Activated naive CD4-positive, alpha-beta T cell treated with anti-CD3 and anti-CD28 coated beads for 36 hours (primary cell): ENCODE measurements at regions of chr12 and their contacts with region 1.

Region 1: DNA sequence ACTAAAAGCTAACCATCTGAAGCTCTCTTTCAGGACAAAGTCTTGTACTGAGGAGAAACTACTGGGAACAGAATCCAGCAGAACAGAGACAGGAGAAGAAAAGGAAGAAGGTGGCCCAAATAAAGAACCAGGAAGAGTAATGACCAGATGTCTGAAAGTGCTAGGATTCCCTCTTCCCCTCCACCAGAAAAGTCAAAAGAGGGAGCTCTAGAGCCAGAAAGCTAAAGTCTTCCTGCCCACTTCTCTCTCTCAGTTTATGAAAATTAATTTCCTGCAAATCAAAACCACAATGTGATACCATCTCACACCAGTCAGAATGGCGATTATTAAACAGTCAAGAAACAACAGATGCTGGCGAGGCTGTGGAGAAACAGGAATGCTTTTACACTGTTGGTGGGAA is 47.2 kb downstream of the SPPL3 start:
- DNase-seq: no peak
- H3K4me3 Mint-ChIP-seq: no peak overlapping the region
- H3K27ac Mint-ChIP-seq: no peak overlapping the region
- H3K4me1 Mint-ChIP-seq: peaks cover 38% of the 10 kb centered on the region
- H3K27me3 Mint-ChIP-seq: no peaks in the 10 kb centered on the region

Region 2: GRCh38 chr12:120886199-120887018 is 29.4 kb after region 1 on chr12:
- CTCF ChIA-PET with region 1: interaction called, 7 read pairs
- intact Hi-C with region 1: loop called (anchors 2 kb)
- DNase-seq: no peak
- H3K4me3 Mint-ChIP-seq: no peak overlapping the region
- H3K27ac Mint-ChIP-seq: peak overlapping the region; percentile 30
- H3K4me1 Mint-ChIP-seq: peaks cover 42% of the 10 kb centered on the region
- H3K27me3 Mint-ChIP-seq: no peaks in the 10 kb centered on the region

Region 3: GRCh38 chr12:120904197-120904773 is 47.3 kb after region 1 on chr12 and contains the start of gene SPPL3:
- CTCF ChIA-PET with region 1: interaction called, 4 read pairs
- intact Hi-C with region 1: loop called (anchors 5 kb)
- DNase-seq: peak; percentile 91
- H3K4me3 Mint-ChIP-seq: peak within 1 kb of the TSS; percentile 99
- H3K27ac Mint-ChIP-seq: peak within 1 kb of the TSS; percentile 91
- H3K4me1 Mint-ChIP-seq: peaks cover 28% of the 10 kb centered on the region
- H3K27me3 Mint-ChIP-seq: no peaks in the 10 kb centered on the region
- total RNA-seq, gene SPPL3: 19.8 to 22.2 TPM

Region 4: DNA sequence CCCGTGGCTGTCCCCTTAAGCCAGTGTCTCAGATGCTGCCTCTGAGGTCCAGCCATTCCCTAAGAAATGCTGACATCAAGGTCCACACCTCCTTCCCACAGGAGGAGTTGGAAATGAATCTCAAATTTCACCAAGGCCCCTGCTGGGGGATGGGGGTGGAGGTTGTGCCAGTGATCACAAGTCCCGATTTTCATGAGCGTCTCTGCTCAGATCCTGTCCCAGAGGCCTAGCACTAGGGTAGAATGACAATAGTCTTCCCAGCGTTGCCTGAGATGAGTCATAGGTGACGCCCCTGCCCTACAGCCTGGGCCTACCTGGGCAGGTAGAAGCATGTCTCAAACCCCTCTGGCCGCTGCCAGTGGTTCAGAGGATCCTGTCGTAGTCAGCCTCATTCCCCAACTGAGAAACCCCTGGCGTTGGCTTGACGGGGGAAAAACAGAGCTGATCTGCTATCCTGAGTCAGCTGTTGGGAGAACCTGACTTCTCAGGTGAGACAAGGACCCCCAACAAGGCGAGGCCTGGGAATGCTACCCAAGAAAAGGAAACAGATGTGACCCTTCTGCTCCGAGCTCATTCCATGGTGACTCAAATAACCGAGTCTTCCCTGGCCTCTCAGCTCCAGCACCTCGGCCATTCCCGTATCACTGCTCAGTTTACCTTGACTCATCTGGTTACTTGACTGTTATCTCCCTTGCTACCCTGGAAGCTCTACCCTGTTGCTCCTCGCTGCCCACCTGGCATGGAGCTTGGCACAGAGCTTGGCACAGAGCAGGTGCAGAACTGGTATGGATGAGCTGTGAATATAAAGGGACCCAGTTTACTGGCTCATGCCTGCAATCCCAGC is 69.0 kb after region 1 on chr12:
- CTCF ChIA-PET with region 1: no interaction called
- intact Hi-C with region 1: no loop called
- DNase-seq: no peak
- H3K4me3 Mint-ChIP-seq: no peak overlapping the region
- H3K27ac Mint-ChIP-seq: no peak overlapping the region
- H3K4me1 Mint-ChIP-seq: no peaks in the 10 kb centered on the region
- H3K27me3 Mint-ChIP-seq: no peaks in the 10 kb centered on the region

Region 5: DNA sequence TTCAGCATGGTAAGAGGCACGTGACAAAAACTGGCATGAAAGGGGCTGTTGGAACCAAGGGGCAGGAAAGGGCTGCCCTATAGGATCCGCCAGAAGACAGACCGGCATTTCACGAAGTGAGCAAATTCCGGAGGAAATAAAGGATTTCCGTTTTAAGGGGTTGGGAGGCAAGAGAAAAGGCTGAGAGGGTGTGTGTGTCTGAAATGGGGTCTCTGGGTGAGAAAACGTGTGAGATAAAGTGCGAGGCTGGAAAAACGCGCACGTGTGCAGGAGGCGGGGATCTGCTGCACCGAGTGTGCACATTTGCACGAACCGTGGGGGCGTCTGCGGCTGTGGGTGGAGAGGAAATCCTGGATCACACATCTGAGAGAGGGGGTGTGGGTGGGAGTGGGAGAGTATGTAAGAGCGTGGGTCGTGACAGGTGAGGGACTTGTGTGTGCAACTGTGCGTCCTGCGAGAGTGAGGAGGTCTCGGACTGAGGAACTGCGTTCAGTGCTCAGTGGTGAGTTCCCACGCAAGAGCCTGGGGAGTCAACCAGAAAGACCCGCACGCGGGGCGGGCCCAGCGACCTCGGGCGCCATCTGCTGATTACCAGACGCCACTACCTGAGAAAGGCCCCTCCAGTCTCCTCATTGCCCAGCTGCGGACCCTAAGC is 238.7 kb after region 1 on chr12:
- CTCF ChIA-PET with region 1: no interaction called
- intact Hi-C with region 1: loop called (anchors 10 kb)
- DNase-seq: peak; percentile 85
- H3K4me3 Mint-ChIP-seq: peak overlapping the region; percentile 71
- H3K27ac Mint-ChIP-seq: no peak overlapping the region
- H3K4me1 Mint-ChIP-seq: peaks cover 33% of the 10 kb centered on the region
- H3K27me3 Mint-ChIP-seq: peaks cover 6% of the 10 kb centered on the region